ENCODE measurements at regions of chr17 and their contacts with region 1.

Region 1: DNA sequence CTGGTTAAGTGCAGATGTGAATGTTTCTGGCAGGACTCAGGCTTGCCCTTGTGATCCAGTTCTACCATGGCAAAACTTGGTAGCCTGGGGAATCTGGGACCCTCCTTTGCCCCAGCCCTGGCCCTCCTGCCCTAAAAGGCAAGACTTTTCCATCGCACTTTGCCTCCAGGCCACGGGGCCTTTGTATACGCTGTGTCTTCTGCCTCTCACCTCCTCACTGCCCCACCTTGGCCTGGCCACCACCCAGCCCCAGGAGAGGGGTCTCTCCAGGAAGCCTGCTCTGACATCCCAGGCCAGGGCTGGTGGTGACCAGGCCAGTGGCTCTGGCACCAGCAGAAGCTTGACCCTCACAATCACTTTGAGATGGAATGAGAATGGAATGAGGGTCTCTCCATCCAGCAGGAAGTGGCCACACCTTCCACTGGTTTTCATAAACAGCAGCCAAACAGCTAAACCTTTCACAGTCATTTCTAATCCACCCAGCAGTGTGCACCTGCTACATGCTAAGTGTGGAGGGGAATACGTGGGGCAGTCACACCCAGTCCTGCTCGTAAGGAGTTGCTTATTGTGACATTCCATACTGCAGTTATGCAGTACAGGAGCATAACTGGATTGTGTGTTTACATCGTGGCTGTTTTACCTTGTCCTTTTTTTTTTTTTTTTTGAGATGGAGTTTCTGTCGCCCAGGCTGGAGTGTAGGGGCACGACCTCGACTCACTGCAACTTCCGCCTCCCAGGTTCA is 1.6 kb upstream of the MRPL38 start:
- DNase-seq: no peak
- H3K4me3 ChIP-seq: no peak overlapping the region
- H3K27ac ChIP-seq: peak overlapping the region; percentile 7
- H3K4me1 ChIP-seq: peaks cover 5% of the 10 kb centered on the region
- H3K27me3 ChIP-seq: no peaks in the 10 kb centered on the region
- CTCF ChIP-seq: no peak

Region 2: GRCh38 chr17:75940724-75941441 is 34.6 kb after region 1 on chr17 and contains the start of gene FBF1:
- intact Hi-C with region 1: no loop called
- DNase-seq: peak; percentile 96
- H3K4me3 ChIP-seq: peak within 1 kb of the TSS; percentile 74
- H3K27ac ChIP-seq: no peak within 1 kb of the TSS
- H3K4me1 ChIP-seq: no peaks in the 10 kb centered on the region
- H3K27me3 ChIP-seq: no peaks in the 10 kb centered on the region
- CTCF ChIP-seq: no peak
- total RNA-seq, gene FBF1: 3.2 to 21.5 TPM

Region 3: GRCh38 chr17:76005263-76006149 is 99.2 kb after region 1 on chr17:
- intact Hi-C with region 1: loop called (anchors 2 kb)
- DNase-seq: peak; percentile 95
- H3K4me3 ChIP-seq: no peak overlapping the region
- H3K27ac ChIP-seq: no peak overlapping the region
- H3K4me1 ChIP-seq: peaks cover 4% of the 10 kb centered on the region
- H3K27me3 ChIP-seq: no peaks in the 10 kb centered on the region
- CTCF ChIP-seq: peak; percentile 78

Measured in colonic mucosa (tissue), 4 donors.